OCI-LY7 (cell line): ENCODE measurements at regions of chr10 and their contacts with region 1.

Region 1: DNA sequence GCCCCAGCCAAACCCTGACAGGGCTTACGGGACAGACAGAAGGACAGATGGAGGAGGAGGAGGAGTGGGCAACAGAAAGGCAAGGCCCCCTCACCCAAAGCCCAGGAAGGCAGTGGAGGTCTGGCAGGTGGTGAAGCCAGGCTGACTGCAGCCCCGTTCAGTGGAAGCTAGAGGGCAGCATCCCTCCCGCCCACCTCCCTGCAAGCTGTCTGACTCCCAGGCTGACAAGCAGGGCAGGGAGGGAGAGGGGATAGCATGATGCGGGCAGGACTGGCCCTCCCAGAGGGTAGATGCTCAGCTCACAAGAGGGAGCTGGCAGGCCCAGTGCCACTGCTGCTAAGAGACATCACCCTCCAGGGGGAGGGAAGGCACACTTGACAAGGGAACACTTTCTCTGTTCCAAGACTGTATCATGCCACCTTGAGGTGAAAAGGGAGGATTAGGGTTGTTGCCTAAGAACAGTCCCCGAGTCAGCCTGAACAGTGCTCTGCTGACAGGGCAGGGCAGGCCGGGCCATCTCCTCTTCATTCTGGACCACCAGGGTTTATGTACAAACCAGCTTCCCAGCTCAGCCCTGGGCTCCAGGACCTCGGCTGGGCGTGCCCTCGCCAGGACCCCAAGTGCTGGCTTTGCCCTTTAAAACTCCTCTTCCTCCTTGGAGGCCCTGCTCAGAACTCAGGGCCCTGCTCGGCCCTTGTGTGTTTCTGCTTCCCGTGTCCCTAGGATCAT is 61.8 kb downstream of the RASGEF1A start:
- DNase-seq: peak; percentile 77
- H3K4me3 ChIP-seq: no peak overlapping the region
- H3K27ac ChIP-seq: no peak overlapping the region
- H3K4me1 ChIP-seq: peaks cover 8% of the 10 kb centered on the region
- CTCF ChIP-seq: peak; percentile 94

Region 2: DNA sequence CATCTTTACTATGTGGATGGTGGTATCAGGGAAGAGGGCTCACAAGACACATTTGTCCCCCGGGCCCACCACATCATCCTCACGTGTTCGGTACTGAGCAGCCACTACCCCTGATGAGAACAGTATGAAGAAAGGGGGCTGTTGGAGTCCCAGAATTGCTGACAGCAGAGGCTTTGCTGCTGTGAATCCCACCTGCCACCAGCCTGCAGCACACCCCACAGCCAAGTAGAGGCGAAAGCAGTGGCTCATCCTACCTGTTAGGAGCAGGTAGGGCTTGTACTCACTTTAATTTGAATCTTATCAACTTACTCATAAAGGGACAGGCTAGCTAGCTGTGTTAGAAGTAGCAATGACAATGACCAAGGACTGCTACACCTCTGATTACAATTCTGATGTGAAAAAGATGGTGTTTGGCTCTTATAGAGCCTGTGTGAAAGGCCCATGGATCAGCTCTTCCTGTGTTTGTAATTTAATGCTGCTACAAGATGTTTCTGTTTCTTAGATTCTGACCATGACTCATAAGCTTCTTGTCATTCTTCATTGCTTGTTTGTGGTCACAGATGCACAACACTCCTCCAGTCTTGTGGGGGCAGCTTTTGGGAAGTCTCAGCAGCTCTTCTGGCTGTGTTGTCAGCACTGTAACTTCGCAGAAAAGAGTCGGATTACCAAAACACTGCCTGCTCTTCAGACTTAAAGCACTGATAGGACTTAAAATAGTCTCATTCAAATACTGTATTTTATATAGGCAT is 76.0 kb before region 1 on chr10:
- CTCF ChIA-PET with region 1: interaction called, 14 read pairs
- POLR2A ChIA-PET with region 1: no interaction called
- intact Hi-C with region 1: no loop called
- DNase-seq: no peak
- H3K4me3 ChIP-seq: no peak overlapping the region
- H3K27ac ChIP-seq: no peak overlapping the region
- H3K4me1 ChIP-seq: peaks cover 66% of the 10 kb centered on the region
- CTCF ChIP-seq: no peak

Region 3: DNA sequence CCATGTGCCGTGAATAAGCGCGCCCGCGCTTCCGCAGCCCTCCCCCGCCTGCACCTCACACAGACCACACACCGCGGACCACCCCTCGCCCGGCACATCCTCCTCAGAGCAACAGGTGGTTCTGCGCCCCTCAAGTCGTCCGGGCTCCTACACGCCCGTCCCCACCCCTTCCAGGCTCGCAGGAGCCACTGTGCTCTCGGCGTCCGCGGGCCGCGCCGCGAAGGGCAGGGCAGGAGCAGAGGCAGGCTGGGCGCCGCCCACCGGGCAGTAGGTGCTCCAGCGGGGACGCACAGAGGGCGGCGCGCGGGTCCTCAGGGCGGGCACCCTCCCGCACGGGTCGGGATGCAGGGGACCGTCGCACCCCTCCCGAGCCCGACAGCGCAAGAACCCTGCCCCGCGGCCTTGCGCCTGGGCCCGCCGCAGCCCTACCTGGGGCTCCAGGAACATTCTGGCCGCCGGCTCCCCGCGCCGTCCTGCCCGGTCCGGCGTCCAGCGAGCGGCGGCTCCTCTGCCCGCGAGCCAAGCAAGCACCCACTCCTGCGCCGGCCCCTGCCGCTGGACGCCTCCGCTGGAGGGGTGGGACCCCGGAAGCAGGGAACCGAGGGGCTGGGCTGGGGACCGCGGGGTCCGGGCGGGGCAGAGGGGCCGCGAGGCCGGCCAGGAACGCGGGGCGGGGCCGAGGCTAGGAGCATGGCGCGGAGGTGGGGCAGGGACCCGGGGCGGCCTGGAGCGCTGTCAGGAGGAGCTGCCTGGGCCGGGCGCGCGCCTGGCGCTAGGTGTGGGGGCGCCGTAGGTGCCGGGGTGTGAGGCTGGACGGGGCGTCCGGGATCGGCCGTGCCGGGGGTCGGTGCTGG is 24.3 kb after region 1 on chr10:
- CTCF ChIA-PET with region 1: no interaction called
- POLR2A ChIA-PET with region 1: no interaction called
- intact Hi-C with region 1: loop called (anchors 2 kb)
- DNase-seq: no peak
- H3K4me3 ChIP-seq: no peak overlapping the region
- H3K27ac ChIP-seq: no peak overlapping the region
- H3K4me1 ChIP-seq: peaks cover 18% of the 10 kb centered on the region
- CTCF ChIP-seq: no peak

Region 4: GRCh38 chr10:43287056-43288007 is 82.2 kb after region 1 on chr10:
- CTCF ChIA-PET with region 1: interaction called, 11 read pairs
- POLR2A ChIA-PET with region 1: no interaction called
- intact Hi-C with region 1: no loop called
- DNase-seq: peak; percentile 39
- H3K4me3 ChIP-seq: no peak overlapping the region
- H3K27ac ChIP-seq: no peak overlapping the region
- H3K4me1 ChIP-seq: peaks cover 7% of the 10 kb centered on the region
- CTCF ChIP-seq: no peak

Region 5: DNA sequence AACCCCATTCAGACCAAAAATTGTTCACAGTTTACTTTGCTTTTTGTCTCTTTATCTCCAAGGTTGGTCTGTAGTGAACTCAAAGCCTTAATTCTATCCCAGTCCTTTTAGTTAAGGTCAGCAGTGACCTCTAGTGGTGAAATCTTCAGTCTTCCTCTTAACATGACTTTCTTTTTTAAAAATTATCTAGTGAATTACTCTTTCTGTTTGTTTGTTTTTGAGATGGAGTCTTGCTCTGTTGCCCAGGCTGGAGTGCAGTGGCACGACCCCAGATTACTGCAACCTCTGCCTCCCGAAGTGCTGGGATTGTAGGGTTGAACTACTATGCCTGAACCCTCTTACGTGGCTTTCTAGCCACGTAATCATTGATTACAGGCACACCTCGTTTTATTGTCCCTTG is 256.8 kb after region 1 on chr10:
- CTCF ChIA-PET with region 1: no interaction called
- POLR2A ChIA-PET with region 1: interaction called, 4 read pairs
- intact Hi-C with region 1: loop called (anchors 1 kb)
- DNase-seq: peak; percentile 87
- H3K4me3 ChIP-seq: no peak overlapping the region
- H3K27ac ChIP-seq: no peak overlapping the region
- H3K4me1 ChIP-seq: no peaks in the 10 kb centered on the region
- CTCF ChIP-seq: peak; percentile 91